Activated T-helper 1 cell treated with anti-CD3 and anti-CD28 coated beads, Interleukin-12 subunit alpha, Interleukin-12 subunit beta, Interleukin-2, Interleukin-4 antibody, amounts not matched to agents 30 ng/mL and 10 ng/mL and 1 ng/mL, durations not matched to agents 14 hours and 24 hours and 36 hours (primary cell): ENCODE measurements at regions of chr3 and their contacts with region 1.

Region 1: GRCh38 chr3:4906107-4906621 is 73.1 kb upstream of the BHLHE40 start:
- DNase-seq: no peak
- H3K4me3 Mint-ChIP-seq: peak overlapping the region; percentile 64
- H3K27ac Mint-ChIP-seq: peak overlapping the region; percentile 94
- H3K4me1 Mint-ChIP-seq: peaks cover 90% of the 10 kb centered on the region
- H3K27me3 Mint-ChIP-seq: no peaks in the 10 kb centered on the region

Region 2: DNA sequence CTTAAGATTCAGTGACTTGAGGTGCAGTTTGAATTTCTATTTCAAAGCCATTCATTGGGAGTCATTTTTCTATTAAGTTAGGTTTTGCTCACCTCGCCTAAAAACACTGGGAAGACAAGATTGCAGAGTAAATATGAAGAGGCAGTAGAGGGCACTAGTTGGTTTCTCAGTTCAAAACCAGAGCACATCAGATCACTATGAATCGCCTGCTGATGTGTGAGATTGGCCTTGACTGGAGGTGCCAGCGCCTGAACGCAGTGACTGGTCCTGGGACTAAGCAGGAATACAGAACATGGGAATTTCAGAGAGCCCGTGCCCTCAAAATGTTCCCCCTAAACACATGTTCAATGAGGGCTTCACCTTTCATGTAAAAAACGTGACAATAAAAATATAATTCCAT is 184.1 kb before region 1 on chr3:
- intact Hi-C with region 1: loop called (anchors 2 kb)
- DNase-seq: no peak
- H3K4me3 Mint-ChIP-seq: no peak overlapping the region
- H3K27ac Mint-ChIP-seq: peak overlapping the region; percentile 90
- H3K4me1 Mint-ChIP-seq: peaks cover 78% of the 10 kb centered on the region
- H3K27me3 Mint-ChIP-seq: no peaks in the 10 kb centered on the region

Region 3: GRCh38 chr3:4888913-4889846 is 17.0 kb before region 1 on chr3:
- intact Hi-C with region 1: loop called (anchors 1 kb)
- DNase-seq: peak; percentile 50
- H3K4me3 Mint-ChIP-seq: peak overlapping the region; percentile 58
- H3K27ac Mint-ChIP-seq: peak overlapping the region; percentile 88
- H3K4me1 Mint-ChIP-seq: peaks cover 59% of the 10 kb centered on the region
- H3K27me3 Mint-ChIP-seq: no peaks in the 10 kb centered on the region

Region 4: GRCh38 chr3:5026331-5027218 is 120.4 kb after region 1 on chr3:
- intact Hi-C with region 1: loop called (anchors 1 kb)
- DNase-seq: peak; percentile 59
- H3K4me3 Mint-ChIP-seq: peak overlapping the region; percentile 81
- H3K27ac Mint-ChIP-seq: peak overlapping the region; percentile 95
- H3K4me1 Mint-ChIP-seq: peaks cover 70% of the 10 kb centered on the region
- H3K27me3 Mint-ChIP-seq: no peaks in the 10 kb centered on the region

Region 5: DNA sequence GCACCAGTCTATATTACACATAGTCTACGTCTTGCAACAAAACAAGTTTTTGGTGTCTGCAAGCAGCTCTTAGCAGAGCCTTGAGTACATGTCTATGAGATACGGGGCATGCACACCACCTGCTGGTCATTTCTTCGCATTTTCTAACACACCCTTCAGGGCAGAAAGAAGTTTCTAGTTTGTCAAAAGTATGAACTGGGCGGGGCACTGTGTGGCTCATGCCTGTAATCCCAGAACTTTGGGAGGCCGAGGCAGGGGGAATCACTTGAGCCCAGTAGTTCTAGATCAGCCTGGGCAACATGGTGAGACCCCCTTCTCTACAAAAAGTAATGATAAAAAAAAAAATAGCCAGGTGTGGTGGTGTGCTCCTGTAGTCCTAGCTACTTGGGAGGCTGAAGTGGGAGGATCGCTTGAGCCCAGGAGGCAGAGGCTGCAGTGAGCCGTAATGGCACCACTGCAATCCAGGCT is 151.7 kb after region 1 on chr3:
- intact Hi-C with region 1: loop called (anchors 2 kb)
- DNase-seq: peak; percentile 69
- H3K4me3 Mint-ChIP-seq: peak overlapping the region; percentile 23
- H3K27ac Mint-ChIP-seq: peak overlapping the region; percentile 53
- H3K4me1 Mint-ChIP-seq: peaks cover 52% of the 10 kb centered on the region
- H3K27me3 Mint-ChIP-seq: no peaks in the 10 kb centered on the region

Region 6: DNA sequence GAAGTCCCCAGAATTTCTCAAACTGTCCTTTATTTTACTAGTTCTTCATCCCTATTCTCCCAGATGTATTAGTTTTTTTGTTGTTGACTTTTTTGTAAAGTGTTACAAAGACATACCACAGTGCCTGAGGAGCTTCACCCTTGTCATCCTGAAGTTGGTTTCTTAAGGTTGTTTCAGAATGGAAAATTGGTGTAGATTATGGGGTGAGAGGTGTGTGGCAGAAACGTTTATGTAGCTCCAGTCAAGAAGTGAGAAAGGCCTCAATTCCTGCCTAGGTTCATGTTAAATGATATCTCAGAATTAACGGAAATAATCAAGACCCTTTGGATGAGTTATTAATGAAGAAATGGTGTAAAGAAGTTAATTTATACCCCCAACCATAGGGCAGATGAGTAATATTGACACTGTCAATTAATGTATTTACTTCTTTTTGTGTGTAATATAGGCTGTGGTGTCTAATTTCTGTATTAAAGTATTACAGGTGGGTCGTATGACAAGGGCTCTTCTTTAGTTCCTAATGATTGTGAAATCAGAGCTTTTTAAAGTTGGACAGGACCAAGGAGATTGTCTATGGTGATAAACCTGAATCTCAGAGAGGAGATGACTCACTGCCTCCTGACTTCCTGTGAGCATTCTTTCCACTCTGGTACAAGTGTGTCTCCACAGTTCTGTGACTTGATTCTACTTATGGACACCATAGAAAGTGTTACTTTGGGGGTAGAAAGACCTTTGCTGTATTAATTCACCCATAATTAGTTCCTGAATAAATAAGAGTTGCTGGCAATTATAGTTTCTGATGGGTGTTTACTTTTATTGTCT is 288.4 kb after region 1 on chr3:
- intact Hi-C with region 1: loop called (anchors 2 kb)
- DNase-seq: peak; percentile 54
- H3K4me3 Mint-ChIP-seq: peak overlapping the region; percentile 74
- H3K27ac Mint-ChIP-seq: peak overlapping the region; percentile 97
- H3K4me1 Mint-ChIP-seq: peaks cover 88% of the 10 kb centered on the region
- H3K27me3 Mint-ChIP-seq: no peaks in the 10 kb centered on the region